ENCODE measurements at regions of chr4 and their contacts with region 1.

Region 1: DNA sequence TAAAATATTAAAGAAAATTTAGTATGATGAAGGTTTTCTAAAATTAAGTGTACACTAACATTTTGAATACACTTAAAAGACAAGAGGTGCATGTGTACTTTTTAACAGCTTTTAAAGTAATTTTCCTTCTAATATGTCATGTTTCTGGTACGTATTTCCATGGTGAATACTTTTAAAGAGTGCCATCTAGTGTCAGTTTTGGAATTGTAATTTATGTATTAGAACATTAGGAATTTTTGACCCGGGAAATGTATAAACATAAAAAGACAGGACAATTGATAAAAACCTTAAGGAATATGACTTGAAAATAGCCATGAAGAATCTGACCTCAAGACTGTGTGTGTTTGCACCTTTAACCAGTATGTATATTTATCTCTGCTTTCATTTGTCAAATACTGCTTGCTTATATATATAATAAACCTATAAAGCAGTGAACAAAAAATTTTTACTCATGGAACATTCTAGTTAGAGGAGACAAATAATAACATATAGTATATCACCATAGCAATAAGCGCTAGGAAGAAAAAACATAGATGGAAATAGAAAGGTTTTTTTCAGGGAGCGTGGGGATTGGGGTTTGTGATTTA is 7.2 kb downstream of the GSTCD start:
- DNase-seq: peak; percentile 55
- H3K4me3 Mint-ChIP-seq: no peak overlapping the region
- H3K27ac Mint-ChIP-seq: peak overlapping the region; percentile 90
- H3K4me1 Mint-ChIP-seq: peaks cover 12% of the 10 kb centered on the region
- H3K27me3 Mint-ChIP-seq: no peaks in the 10 kb centered on the region
- CTCF ChIP-seq: no peak

Region 2: DNA sequence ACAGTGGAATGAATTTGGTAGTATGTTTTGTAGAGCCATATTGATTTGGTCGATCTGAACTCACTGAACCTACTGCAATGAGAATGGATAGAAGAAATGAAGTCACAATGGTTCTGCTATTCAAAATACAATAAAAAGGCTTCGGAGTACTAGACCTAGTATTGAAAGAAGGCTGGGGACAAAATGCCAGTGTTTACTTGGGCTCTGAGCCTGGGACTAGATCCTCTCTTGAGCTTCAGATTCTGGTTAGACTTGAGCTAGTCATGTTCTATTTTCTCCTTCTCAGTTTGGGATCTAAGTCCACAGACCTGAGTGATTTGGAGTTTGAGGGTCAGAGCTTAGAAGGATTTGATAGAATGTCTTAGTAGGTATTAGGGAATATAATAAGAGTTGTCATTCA is 17.2 kb before region 1 on chr4:
- CTCF ChIA-PET with region 1: no interaction called
- POLR2A ChIA-PET with region 1: no interaction called
- intact Hi-C with region 1: no loop called
- DNase-seq: no peak
- H3K4me3 Mint-ChIP-seq: no peak overlapping the region
- H3K27ac Mint-ChIP-seq: no peak overlapping the region
- H3K4me1 Mint-ChIP-seq: no peaks in the 10 kb centered on the region
- H3K27me3 Mint-ChIP-seq: no peaks in the 10 kb centered on the region
- CTCF ChIP-seq: no peak

Region 3: GRCh38 chr4:105808750-105809041 is 92.9 kb after region 1 on chr4:
- CTCF ChIA-PET with region 1: no interaction called
- POLR2A ChIA-PET with region 1: no interaction called
- intact Hi-C with region 1: loop called (anchors 1 kb)
- DNase-seq: peak; percentile 73
- H3K4me3 Mint-ChIP-seq: no peak overlapping the region
- H3K27ac Mint-ChIP-seq: peak overlapping the region; percentile 76
- H3K4me1 Mint-ChIP-seq: peaks cover 31% of the 10 kb centered on the region
- H3K27me3 Mint-ChIP-seq: no peaks in the 10 kb centered on the region
- CTCF ChIP-seq: no peak

Region 4: GRCh38 chr4:106140601-106141000 is 424.8 kb after region 1 on chr4:
- CTCF ChIA-PET with region 1: no interaction called
- POLR2A ChIA-PET with region 1: no interaction called
- intact Hi-C with region 1: loop called (anchors 1 kb)
- DNase-seq: peak; percentile 5
- H3K4me3 Mint-ChIP-seq: no peak overlapping the region
- H3K27ac Mint-ChIP-seq: no peak overlapping the region
- H3K4me1 Mint-ChIP-seq: no peaks in the 10 kb centered on the region
- H3K27me3 Mint-ChIP-seq: no peaks in the 10 kb centered on the region
- CTCF ChIP-seq: no peak